Natural killer cell (primary cell): ENCODE measurements at regions of chr11 and their contacts with region 1.

Region 1: DNA sequence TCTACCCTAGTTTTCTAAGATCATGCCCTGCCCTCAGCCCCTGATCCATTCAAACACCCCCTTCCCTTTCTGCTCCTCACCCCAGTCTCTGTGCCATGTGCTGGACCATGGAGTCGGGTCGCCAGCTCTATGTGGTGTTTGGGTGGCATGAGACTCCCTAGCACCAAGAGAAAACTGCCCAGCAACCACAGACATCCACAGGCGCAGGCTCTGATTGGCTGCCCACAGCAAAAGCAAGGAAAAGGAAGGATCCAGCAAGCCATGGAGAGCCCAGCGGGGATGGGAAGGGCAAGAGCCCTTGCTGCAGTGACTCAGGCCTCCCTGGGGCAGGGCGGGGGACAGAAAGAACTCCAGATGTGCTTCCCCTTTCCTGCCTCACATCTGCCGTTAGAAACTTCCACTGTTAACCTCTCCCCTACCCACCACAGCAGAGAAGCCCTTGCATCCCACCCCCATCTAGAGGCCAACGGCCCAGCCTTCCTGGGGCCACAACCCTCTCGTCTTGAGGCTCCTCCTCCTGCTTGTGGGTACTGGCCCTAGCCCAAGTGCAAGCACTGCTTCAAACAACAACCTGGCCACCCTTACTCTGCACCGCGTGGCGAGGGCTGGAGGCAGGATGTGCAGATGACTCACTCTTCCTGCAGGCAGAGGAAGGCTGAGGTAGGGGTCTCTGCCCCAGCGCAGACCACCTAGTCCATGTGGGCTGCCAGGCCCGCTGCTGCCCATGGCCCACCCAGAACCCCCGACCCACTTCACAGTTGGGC is 9.7 kb upstream of the AHNAK start:
- DNase-seq: peak; percentile 81 to 93
- ATAC-seq: peak; percentile 53 to 79 (median 69)
- H3K4me3 ChIP-seq: peak overlapping the region; percentile 12
- H3K4me3 Mint-ChIP-seq: peak overlapping the region; percentile 93
- H3K27ac ChIP-seq: peak overlapping the region; percentile 97
- H3K27ac Mint-ChIP-seq: peak overlapping the region; percentile 97 to 98
- H3K4me1 ChIP-seq: peaks cover 92% of the 10 kb centered on the region
- H3K4me1 Mint-ChIP-seq: peaks cover 85 to 96% of the 10 kb centered on the region in 2 donors
- H3K27me3 ChIP-seq: no peaks in the 10 kb centered on the region
- H3K27me3 Mint-ChIP-seq: no peaks in the 10 kb centered on the region
- CTCF ChIP-seq: no peak

Region 2: GRCh38 chr11:62542750-62543567 is 13.3 kb before region 1 on chr11:
- intact Hi-C with region 1: loop called (anchors 1 kb)
- DNase-seq: peak; percentile 67 to 85
- ATAC-seq: peak; percentile 59 to 70 (median 59)
- H3K4me3 ChIP-seq: peak overlapping the region; percentile 95
- H3K4me3 Mint-ChIP-seq: peak overlapping the region; percentile 97
- H3K27ac ChIP-seq: peak overlapping the region; percentile 94
- H3K27ac Mint-ChIP-seq: peak overlapping the region; percentile 92 to 94
- H3K4me1 ChIP-seq: peaks cover 81% of the 10 kb centered on the region
- H3K4me1 Mint-ChIP-seq: peaks cover 71 to 82% of the 10 kb centered on the region in 2 donors
- H3K27me3 ChIP-seq: no peaks in the 10 kb centered on the region
- H3K27me3 Mint-ChIP-seq: no peaks in the 10 kb centered on the region
- CTCF ChIP-seq: peak; percentile 96

Region 3: GRCh38 chr11:62573592-62574362 is 17.5 kb after region 1 on chr11 and contains the start of gene EEF1G:
- intact Hi-C with region 1: loop called (anchors 1 kb)
- DNase-seq: peak; percentile 95 to 99
- ATAC-seq: peak; percentile 94 to 98 (median 94)
- H3K4me3 ChIP-seq: peak within 1 kb of the TSS; percentile 94
- H3K4me3 Mint-ChIP-seq: peak within 1 kb of the TSS; percentile 99
- H3K27ac ChIP-seq: peak within 1 kb of the TSS; percentile 80
- H3K27ac Mint-ChIP-seq: peak within 1 kb of the TSS; percentile 92 to 95
- H3K4me1 ChIP-seq: peaks cover 27% of the 10 kb centered on the region
- H3K4me1 Mint-ChIP-seq: peaks cover 36 to 54% of the 10 kb centered on the region in 2 donors
- H3K27me3 ChIP-seq: no peaks in the 10 kb centered on the region
- H3K27me3 Mint-ChIP-seq: no peaks in the 10 kb centered on the region
- CTCF ChIP-seq: no peak
- total RNA-seq, gene EEF1G: 628 to 754 (median 714) TPM

Region 4: DNA sequence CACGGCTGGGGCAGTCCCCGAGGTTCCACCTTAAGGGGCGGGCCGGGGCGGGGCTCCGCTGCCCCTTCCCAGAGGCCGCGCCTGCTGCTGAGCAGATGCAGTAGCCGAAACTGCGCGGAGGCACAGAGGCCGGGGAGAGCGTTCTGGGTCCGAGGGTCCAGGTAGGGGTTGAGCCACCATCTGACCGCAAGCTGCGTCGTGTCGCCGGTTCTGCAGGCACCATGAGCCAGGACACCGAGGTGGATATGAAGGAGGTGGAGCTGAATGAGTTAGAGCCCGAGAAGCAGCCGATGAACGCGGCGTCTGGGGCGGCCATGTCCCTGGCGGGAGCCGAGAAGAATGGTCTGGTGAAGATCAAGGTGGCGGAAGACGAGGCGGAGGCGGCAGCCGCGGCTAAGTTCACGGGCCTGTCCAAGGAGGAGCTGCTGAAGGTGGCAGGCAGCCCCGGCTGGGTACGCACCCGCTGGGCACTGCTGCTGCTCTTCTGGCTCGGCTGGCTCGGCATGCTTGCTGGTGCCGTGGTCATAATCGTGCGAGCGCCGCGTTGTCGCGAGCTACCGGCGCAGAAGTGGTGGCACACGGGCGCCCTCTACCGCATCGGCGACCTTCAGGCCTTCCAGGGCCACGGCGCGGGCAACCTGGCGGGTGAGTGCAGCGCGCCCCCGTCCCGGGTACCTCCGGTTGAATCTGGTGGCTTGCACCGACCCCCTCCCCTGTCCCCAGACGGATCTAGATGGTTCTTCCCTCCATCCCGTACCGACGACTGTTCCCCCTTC is 324.7 kb after region 1 on chr11 and contains the start of gene SLC3A2:
- intact Hi-C with region 1: loop called (anchors 1 kb)
- DNase-seq: peak; percentile 88 to 94
- ATAC-seq: peak; percentile 72 to 89 (median 80)
- H3K4me3 ChIP-seq: peak within 1 kb of the TSS; percentile 100
- H3K4me3 Mint-ChIP-seq: peak within 1 kb of the TSS; percentile 100
- H3K27ac ChIP-seq: peak within 1 kb of the TSS; percentile 90
- H3K27ac Mint-ChIP-seq: peak within 1 kb of the TSS; percentile 99
- H3K4me1 ChIP-seq: peaks cover 36% of the 10 kb centered on the region
- H3K4me1 Mint-ChIP-seq: peaks cover 41 to 56% of the 10 kb centered on the region in 2 donors
- H3K27me3 ChIP-seq: no peaks in the 10 kb centered on the region
- H3K27me3 Mint-ChIP-seq: no peaks in the 10 kb centered on the region
- CTCF ChIP-seq: peak; percentile 82
- total RNA-seq, gene SLC3A2: 200 to 235 (median 207) TPM